Activated CD4-positive, alpha-beta memory T cell treated with anti-CD3 and anti-CD28 coated beads for 36 hours (primary cell): ENCODE measurements at regions of chr20 and their contacts with region 1.

Region 1: GRCh38 chr20:44210422-44211176 is at the start of gene OSER1:
- DNase-seq: peak; percentile 99
- H3K4me3 Mint-ChIP-seq: peak within 1 kb of the TSS; percentile 98
- H3K27ac Mint-ChIP-seq: peak within 1 kb of the TSS; percentile 93
- H3K4me1 Mint-ChIP-seq: peaks cover 61% of the 10 kb centered on the region
- H3K27me3 Mint-ChIP-seq: peaks cover 1% of the 10 kb centered on the region
- total RNA-seq, gene OSER1: 23.4 to 24.2 TPM

Region 2: GRCh38 chr20:43603136-43603535 is 607.5 kb before region 1 on chr20:
- CTCF ChIA-PET with region 1: no interaction called
- POLR2A ChIA-PET with region 1: no interaction called
- intact Hi-C with region 1: no loop called
- DNase-seq: no peak
- H3K4me3 Mint-ChIP-seq: no peak overlapping the region
- H3K27ac Mint-ChIP-seq: no peak overlapping the region
- H3K4me1 Mint-ChIP-seq: no peaks in the 10 kb centered on the region
- H3K27me3 Mint-ChIP-seq: no peaks in the 10 kb centered on the region

Region 3: DNA sequence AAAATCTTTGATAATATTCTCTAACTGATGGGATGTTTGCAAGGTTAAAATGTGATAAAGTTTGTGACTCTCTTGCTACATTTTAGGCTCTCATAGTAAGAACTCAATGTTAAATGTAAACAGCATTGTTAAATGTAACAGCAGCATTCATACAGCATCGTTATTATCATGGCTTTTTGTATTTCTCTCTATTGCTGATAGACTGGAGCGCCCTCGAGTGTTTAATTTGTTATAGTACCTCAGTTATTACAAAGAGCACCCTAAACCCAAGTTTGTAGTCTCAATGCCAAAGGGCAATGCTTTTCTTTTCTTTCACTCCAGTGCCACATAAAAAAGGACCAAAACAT is 250.2 kb after region 1 on chr20:
- CTCF ChIA-PET with region 1: interaction called, 3 read pairs
- POLR2A ChIA-PET with region 1: no interaction called
- intact Hi-C with region 1: loop called (anchors 5 kb)
- DNase-seq: no peak
- H3K4me3 Mint-ChIP-seq: no peak overlapping the region
- H3K27ac Mint-ChIP-seq: no peak overlapping the region
- H3K4me1 Mint-ChIP-seq: no peaks in the 10 kb centered on the region
- H3K27me3 Mint-ChIP-seq: no peaks in the 10 kb centered on the region

Region 4: DNA sequence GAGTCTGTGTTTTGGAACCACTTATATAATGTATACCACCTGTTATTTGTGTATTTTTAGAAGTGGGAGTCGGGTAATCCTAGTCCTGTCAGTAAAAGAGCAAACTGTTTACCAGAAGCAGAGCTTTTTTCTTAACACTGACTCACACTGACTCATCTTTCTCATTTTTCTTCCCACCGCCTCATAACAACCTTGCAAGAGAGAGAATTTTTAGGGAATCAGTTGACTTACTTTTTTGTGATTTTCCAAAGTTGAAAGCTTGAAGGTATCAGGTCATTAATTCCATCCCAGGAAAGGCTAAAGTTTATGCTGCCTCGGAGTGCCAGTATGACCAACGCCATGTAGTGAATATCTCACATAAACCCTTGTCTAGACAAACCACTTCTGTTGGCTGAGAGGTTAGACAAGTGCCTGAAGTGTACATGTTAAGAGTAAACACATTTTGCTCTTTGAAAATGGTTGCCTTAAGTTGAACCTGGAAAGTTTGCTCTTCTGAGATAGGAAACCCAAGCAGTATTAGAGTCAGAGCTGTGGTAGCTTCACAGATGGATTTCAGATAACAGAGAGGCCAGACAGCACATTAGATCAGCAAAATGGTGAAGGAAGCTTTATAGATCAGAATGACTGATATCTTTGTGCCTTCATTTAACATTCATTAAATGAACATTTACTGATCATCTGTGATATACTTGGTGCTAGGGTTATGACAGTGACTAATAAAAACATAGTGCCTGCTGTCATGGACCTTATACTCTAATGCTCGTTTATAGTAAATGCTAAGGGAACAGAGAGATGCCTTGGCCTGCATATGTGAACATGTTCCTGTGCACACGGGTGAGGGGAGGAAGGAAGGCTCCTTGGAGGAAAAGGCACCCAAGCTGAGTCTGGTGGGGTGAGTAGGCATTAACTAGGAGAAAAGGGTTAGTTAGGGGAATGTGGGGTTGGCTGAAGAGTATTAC is 342.6 kb after region 1 on chr20:
- CTCF ChIA-PET with region 1: no interaction called
- POLR2A ChIA-PET with region 1: no interaction called
- intact Hi-C with region 1: no loop called
- DNase-seq: no peak
- H3K4me3 Mint-ChIP-seq: no peak overlapping the region
- H3K27ac Mint-ChIP-seq: peak overlapping the region; percentile 65
- H3K4me1 Mint-ChIP-seq: peaks cover 16% of the 10 kb centered on the region
- H3K27me3 Mint-ChIP-seq: no peaks in the 10 kb centered on the region